ENCODE measurements at regions of chr1 and their contacts with region 1.

Region 1: DNA sequence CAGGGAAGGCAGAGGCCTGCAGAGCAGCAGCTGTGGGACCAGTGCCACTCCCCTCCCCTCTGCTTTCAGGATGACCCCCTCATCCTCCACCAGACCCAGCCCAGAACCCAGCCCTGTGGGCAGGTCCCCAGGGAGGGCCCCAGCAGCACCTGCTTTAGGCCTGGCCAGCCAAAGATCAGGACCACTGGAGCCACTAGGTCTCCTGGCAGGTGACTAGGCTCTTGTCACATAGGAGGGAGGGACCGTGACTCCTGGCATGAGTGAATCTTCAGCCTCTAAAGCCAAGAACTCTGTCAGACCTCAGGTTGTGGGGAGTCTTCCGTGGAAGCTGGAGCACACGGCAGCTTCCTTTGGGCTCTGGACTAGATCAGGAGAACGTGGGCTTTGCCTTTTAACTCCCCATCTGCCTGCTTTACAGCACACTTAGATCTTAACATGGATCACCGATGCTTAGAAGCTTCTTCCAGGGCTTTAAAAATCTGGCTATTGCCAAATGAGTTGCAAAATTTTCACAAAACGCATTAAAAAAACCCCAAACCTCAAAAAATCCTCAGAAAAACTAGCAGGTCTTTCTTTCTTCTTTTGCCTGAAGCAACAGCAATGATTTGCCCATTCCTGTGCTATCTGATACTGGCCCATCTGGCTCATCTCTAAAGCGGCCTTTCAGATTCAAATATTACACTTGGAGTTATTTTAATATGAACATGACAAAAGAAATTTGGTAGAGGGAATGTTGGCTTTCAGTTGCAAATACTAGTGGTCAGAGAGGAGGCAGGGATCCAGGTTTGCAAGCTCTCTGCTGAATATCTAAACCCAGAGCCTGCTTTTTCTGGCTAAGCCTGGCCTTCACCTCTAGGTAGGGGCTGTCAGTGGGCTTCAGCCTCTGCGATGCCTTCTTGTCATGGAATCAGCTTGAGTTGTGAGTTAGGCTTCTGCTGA is 235.2 kb downstream of the SDCCAG8 start:
- DNase-seq: no peak
- H3K4me3 Mint-ChIP-seq: no peak overlapping the region
- H3K27ac Mint-ChIP-seq: peak overlapping the region; percentile 42
- H3K4me1 Mint-ChIP-seq: no peaks in the 10 kb centered on the region
- H3K27me3 Mint-ChIP-seq: no peaks in the 10 kb centered on the region
- CTCF ChIP-seq: no peak

Region 2: DNA sequence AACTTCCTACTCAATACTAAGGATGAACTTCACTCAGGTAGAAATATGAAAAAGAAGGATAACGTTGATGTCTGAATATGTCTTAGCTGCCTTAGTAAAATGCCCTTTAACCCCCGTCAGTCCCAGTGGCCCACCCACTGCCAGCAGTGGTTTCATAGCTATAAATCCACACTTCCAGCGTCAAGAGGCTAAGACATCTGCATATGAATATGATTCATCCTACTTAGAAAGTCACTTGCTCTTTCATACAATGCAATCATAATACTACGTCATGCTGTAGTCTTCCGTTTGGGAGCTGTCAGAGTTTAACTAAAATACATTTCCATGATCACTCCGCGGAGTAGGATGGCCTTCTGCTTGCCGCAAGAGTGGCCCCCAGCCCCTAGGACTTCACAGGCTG is 12.1 kb after region 1 on chr1:
- CTCF ChIA-PET with region 1: interaction called, 14 read pairs
- POLR2A ChIA-PET with region 1: interaction called, 4 read pairs
- intact Hi-C with region 1: no loop called
- DNase-seq: no peak
- H3K4me3 Mint-ChIP-seq: no peak overlapping the region
- H3K27ac Mint-ChIP-seq: no peak overlapping the region
- H3K4me1 Mint-ChIP-seq: no peaks in the 10 kb centered on the region
- H3K27me3 Mint-ChIP-seq: no peaks in the 10 kb centered on the region
- CTCF ChIP-seq: no peak

Measured in MCF 10A (cell line).